ENCODE measurements at regions of chr6 and their contacts with region 1.

Region 1: GRCh38 chr6:105097288-105097687 is 82.5 kb downstream of the POPDC3 start:
- DNase-seq: no peak

Region 2: DNA sequence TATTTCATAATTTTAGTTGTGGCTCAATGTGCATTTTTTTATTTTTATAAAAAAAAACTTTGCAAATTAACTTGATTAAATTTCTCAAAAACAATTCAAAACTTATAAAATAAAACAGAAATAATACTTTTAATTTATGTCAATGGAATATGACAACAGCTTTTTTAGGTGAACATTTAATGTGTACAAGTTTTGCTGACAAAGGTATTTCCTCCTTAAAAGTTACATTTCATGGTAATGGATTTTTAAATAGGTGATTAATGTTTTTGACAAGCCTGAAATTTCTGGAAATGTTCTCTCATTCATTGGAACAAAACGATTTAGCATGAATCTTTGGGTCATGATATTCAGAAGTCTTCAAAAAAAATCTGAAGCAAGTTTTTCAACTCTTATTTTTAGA is 1397.5 kb before region 1 on chr6:
- intact Hi-C with region 1: loop called in 1 of 2 experiments (anchors 5 kb)
- DNase-seq: no peak

Region 3: DNA sequence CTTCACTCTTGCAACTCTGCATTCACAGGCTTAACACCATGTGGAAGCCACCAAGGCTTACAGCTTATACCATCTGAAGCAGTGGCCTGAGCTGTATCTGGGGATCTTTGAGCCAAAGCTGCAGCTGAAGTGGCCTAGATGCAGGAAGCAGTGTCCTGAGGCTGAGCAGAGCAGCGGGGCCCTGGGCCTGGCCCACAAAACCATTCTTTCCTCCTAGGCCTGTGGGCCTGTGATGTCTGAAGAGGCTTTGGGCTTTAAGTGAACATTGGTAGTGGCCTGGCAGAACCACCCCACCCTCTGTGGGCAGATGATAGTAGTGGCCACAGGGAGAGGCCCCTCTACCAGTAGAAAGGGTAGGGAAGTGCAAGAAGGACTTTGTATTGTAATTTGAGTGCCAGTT is 312.4 kb after region 1 on chr6:
- intact Hi-C with region 1: loop called in 1 of 2 experiments (anchors 10 kb)
- DNase-seq: no peak